CD8-positive, alpha-beta memory T cell (primary cell): ENCODE measurements at regions of chr1 and their contacts with region 1.

Region 1: DNA sequence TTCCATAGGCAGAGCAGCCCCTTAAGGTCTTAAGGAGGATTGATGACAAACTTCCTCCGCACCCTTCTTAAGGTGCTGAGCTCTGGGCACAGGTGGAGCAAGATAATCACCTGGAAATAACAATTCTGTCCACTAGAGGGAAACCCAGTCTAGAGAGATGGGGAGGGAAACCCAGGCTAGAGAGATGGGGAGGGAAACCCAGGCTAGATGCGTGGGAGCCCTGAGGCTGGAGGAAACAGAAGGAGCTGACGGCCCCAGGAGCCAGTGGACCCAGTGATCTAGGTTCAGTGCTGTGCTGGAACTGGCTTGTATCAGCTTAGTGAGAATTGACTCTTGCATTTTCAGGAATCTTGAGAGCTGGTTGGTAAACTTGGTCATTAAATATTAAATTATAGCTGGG is 17.8 kb upstream of the MYCL start:
- DNase-seq: peak in 4 of 5 donors; percentile 8 to 61 (median 54)
- H3K4me3 ChIP-seq: no peak overlapping the region
- H3K4me3 Mint-ChIP-seq: no peak overlapping the region
- H3K27ac ChIP-seq: no peak overlapping the region
- H3K27ac Mint-ChIP-seq: no peak overlapping the region
- H3K4me1 ChIP-seq: peaks cover 4% of the 10 kb centered on the region
- H3K4me1 Mint-ChIP-seq: peaks cover 0 to 3% (median 0%) of the 10 kb centered on the region in 3 donors
- H3K27me3 ChIP-seq: no peaks in the 10 kb centered on the region
- H3K27me3 Mint-ChIP-seq: peaks cover 1 to 9% of the 10 kb centered on the region in 2 donors

Region 2: GRCh38 chr1:39907528-39908453 is 11.8 kb before region 1 on chr1:
- CTCF ChIA-PET with region 1: interaction called, 10 read pairs
- POLR2A ChIA-PET with region 1: no interaction called
- DNase-seq: no peak
- H3K4me3 ChIP-seq: no peak overlapping the region
- H3K4me3 Mint-ChIP-seq: no peak overlapping the region
- H3K27ac ChIP-seq: no peak overlapping the region
- H3K27ac Mint-ChIP-seq: no peak overlapping the region
- H3K4me1 ChIP-seq: no peaks in the 10 kb centered on the region
- H3K4me1 Mint-ChIP-seq: peaks cover 0 to 4% (median 0%) of the 10 kb centered on the region in 3 donors
- H3K27me3 ChIP-seq: peaks cover 5% of the 10 kb centered on the region
- H3K27me3 Mint-ChIP-seq: peaks cover 25 to 64% of the 10 kb centered on the region in 2 donors

Region 3: DNA sequence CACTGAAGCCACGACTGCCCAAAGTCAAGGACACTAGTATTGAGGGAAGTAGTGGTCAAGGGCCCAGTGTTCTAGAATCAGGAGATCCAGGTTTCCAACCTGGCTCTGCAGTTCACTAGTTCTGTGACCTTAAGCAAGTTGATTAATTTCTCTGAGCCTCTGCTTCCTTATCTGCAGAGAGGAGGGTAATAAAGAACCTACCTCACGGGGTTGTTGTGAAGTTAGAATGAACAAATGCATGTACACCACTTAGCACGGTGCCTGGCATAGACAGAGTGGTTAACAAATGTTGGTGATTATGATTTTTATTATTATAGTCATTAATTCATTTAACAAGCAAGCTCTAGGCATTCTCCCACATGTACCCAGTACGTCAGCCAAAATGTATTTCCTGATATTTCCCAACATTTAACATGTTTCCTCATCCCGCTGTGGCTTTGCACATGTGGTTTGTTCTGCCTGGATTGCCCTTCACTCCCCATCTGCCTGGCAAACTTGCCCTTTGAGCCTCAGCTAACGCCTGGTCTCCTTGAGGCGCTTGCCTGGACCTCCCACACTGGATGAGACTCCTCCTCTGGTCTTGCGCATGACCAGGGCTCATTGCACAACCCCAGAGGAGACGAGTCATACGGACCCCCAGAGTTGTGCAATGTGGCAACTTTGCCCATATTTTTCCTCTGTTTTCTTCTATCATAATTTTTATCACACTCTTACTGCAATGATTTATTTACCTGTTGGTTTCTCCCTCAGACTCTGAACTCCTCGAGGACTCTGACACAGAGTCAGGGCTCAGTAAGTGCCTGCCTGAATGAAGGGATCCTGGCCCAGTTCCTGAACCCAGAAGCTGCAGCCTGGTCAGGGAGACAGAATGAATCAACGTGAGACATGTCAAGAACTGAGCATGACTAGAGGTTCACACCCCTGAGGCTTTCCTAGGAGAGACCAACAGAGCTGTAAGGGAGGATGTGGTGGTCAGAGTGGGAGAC is 14.7 kb after region 1 on chr1:
- CTCF ChIA-PET with region 1: interaction called, 20 read pairs
- POLR2A ChIA-PET with region 1: no interaction called
- DNase-seq: no peak
- H3K4me3 ChIP-seq: no peak overlapping the region
- H3K4me3 Mint-ChIP-seq: no peak overlapping the region
- H3K27ac ChIP-seq: no peak overlapping the region
- H3K27ac Mint-ChIP-seq: peak overlapping the region in 1 of 8 donors; percentile 74
- H3K4me1 ChIP-seq: no peaks in the 10 kb centered on the region
- H3K4me1 Mint-ChIP-seq: no peaks in the 10 kb centered on the region
- H3K27me3 ChIP-seq: no peaks in the 10 kb centered on the region
- H3K27me3 Mint-ChIP-seq: peaks cover 2 to 3% of the 10 kb centered on the region in 2 donors

Region 4: GRCh38 chr1:39959651-39960333 is 40.2 kb after region 1 on chr1:
- CTCF ChIA-PET with region 1: no interaction called
- POLR2A ChIA-PET with region 1: no interaction called
- DNase-seq: no peak
- H3K4me3 ChIP-seq: no peak overlapping the region
- H3K4me3 Mint-ChIP-seq: no peak overlapping the region
- H3K27ac ChIP-seq: no peak overlapping the region
- H3K27ac Mint-ChIP-seq: peak overlapping the region in 1 of 8 donors; percentile 55
- H3K4me1 ChIP-seq: peaks cover 13% of the 10 kb centered on the region
- H3K4me1 Mint-ChIP-seq: peaks cover 7 to 14% (median 11%) of the 10 kb centered on the region in 3 donors
- H3K27me3 ChIP-seq: no peaks in the 10 kb centered on the region
- H3K27me3 Mint-ChIP-seq: peaks cover 0 to 1% of the 10 kb centered on the region in 2 donors

Region 5: GRCh38 chr1:39973503-39974135 is 54.1 kb after region 1 on chr1:
- CTCF ChIA-PET with region 1: interaction called, 75 read pairs
- POLR2A ChIA-PET with region 1: no interaction called
- DNase-seq: peak; percentile 56 to 78 (median 62)
- H3K4me3 ChIP-seq: no peak overlapping the region
- H3K4me3 Mint-ChIP-seq: no peak overlapping the region
- H3K27ac ChIP-seq: no peak overlapping the region
- H3K27ac Mint-ChIP-seq: no peak overlapping the region
- H3K4me1 ChIP-seq: no peaks in the 10 kb centered on the region
- H3K4me1 Mint-ChIP-seq: peaks cover 5 to 6% (median 5%) of the 10 kb centered on the region in 3 donors
- H3K27me3 ChIP-seq: no peaks in the 10 kb centered on the region
- H3K27me3 Mint-ChIP-seq: peaks cover 0 to 2% of the 10 kb centered on the region in 2 donors

Region 6: DNA sequence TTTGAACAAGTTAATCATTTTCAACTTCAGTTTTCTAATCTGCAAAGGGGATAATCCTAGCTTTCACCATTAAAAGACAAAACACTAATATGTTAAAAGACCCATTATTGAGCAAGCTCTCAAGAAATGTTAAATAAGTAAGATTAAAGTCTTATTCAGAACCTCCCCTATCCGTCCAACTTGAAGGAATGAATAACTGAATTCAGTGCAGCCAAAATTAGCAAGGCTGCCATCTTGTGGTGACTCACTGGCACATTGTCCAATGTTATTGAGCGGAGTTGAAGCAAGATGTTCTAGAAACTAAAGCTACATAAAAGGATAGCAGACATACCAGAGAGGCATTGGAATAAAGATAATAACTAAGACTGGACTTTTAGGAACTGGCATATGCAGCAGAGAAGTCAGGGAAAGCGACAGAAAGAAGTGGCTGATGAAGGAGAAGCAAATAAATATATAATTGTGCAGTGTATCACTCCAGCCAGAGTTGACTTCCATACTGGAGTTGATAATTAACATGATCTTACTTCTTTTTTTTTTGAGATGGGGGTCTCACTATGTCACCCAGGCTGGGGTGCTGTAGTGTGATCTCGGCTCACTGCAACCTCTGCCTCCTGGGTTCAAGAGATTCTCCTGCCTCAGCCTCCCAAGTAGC is 112.8 kb after region 1 on chr1:
- CTCF ChIA-PET with region 1: interaction called, 31 read pairs
- POLR2A ChIA-PET with region 1: no interaction called
- DNase-seq: peak; percentile 21 to 66 (median 38)
- H3K4me3 ChIP-seq: no peak overlapping the region
- H3K4me3 Mint-ChIP-seq: peak overlapping the region in 1 of 7 donors; percentile 1
- H3K27ac ChIP-seq: no peak overlapping the region
- H3K27ac Mint-ChIP-seq: peak overlapping the region in 6 of 8 donors; percentile 12 to 89 (median 70)
- H3K4me1 ChIP-seq: peaks cover 50% of the 10 kb centered on the region
- H3K4me1 Mint-ChIP-seq: peaks cover 37 to 53% (median 45%) of the 10 kb centered on the region in 3 donors
- H3K27me3 ChIP-seq: no peaks in the 10 kb centered on the region
- H3K27me3 Mint-ChIP-seq: peaks cover 0 to 1% of the 10 kb centered on the region in 2 donors